A549 (cell line): ENCODE measurements at regions of chr16 and their contacts with region 1.

Region 1: DNA sequence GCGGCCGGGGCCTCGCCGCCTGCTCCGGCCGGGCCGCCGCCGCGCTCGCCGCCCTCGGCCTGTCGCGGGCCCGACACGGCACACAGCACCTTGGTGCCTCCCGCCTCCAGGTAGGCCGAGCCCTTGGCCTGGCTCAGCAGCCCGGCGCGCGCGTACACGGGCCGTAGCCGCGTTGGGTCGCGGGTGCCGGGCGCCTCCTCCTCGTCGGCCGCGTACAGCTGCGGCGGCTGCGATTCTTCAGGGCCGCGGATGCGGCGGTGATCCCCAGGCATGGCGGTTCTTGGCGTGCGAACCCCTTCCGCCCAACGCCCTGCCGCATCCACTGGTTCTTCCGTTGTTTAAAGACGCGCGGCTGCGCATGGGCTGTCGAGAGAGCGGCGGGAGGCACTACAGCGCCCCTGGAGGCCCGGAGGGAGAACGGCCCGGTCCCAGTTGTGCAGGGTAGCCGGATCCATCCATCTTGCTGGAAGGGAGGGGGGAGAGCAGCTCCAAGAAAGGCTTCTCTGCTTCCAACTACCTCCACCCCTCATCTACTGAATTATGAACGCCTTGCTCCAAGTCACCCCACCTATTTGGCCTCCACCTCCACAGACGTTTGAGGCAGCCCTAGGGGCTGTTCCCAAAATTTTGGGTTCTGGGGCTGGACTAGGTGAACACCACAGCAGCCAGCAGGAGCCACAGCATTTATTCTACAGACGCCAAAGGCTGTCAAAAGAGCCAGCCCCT is at the start of gene EXOSC6:
- DNase-seq: peak; percentile 94 to 97
- ATAC-seq: peak; percentile 79 to 95
- H3K4me3 ChIP-seq: peak within 1 kb of the TSS; percentile 69
- H3K27ac ChIP-seq: peak within 1 kb of the TSS; percentile 94 to 98
- H3K4me1 ChIP-seq: peaks cover 11% of the 10 kb centered on the region
- CTCF ChIP-seq: peak; percentile 72
- EP300 ChIP-seq: peak in 1 of 2 experiments; percentile 13; a peak in 1 of 5 replicates
- POLR2A ChIP-seq: peak; percentile 84
- RAD21 ChIP-seq: no peak
- polyA plus RNA-seq, gene EXOSC6: 12.9 and 15.0 TPM in 2 replicates

Region 2: DNA sequence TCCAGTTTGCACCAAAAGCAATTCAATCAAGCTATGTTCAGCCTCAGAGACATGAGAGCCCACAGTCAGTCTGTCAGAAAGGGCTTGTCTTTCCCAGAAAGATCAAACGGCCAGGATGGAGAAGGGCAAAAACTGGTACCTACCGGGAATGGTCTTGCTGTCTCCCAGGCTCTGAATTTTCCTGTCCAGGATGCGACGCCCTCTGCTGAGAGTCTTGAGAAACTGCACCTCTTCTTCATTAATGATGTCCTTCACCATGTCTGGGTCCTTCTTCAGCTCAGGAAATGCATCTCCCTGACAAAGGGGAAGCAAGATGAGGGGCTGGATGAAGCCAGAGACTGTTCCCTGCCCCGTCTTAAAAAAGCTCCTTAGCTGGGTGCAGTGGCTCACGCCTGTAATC is 15.7 kb after region 1 on chr16:
- CTCF ChIA-PET with region 1: interaction called, 53 read pairs
- POLR2A ChIA-PET with region 1: interaction called, 3 read pairs
- DNase-seq: peak; percentile 66 to 67
- ATAC-seq: peak; percentile 85 to 88; a peak in 5 of 6 replicates
- H3K4me3 ChIP-seq: no peak overlapping the region
- H3K27ac ChIP-seq: no peak overlapping the region
- H3K4me1 ChIP-seq: no peaks in the 10 kb centered on the region
- CTCF ChIP-seq: peak; percentile 40; the same call in 2 of the 3 replicates
- EP300 ChIP-seq: no peak
- POLR2A ChIP-seq: no peak
- RAD21 ChIP-seq: peak in 1 of 2 experiments; percentile 37; a peak in 2 of 5 replicates

Region 3: GRCh38 chr16:70276392-70276791 is 24.6 kb after region 1 on chr16:
- CTCF ChIA-PET with region 1: interaction called, 34 read pairs
- POLR2A ChIA-PET with region 1: interaction called, 7 read pairs
- DNase-seq: no peak
- ATAC-seq: no peak
- H3K4me3 ChIP-seq: no peak overlapping the region
- H3K27ac ChIP-seq: no peak overlapping the region
- H3K4me1 ChIP-seq: no peaks in the 10 kb centered on the region
- CTCF ChIP-seq: no peak
- EP300 ChIP-seq: no peak
- POLR2A ChIP-seq: no peak
- RAD21 ChIP-seq: no peak

Region 4: GRCh38 chr16:70289229-70290098 is 37.7 kb after region 1 on chr16 and contains the start of gene AARS1:
- CTCF ChIA-PET with region 1: interaction called, 10 read pairs
- POLR2A ChIA-PET with region 1: interaction called, 7 read pairs
- DNase-seq: peak; percentile 99 to 100
- ATAC-seq: peak; percentile 99 to 100
- H3K4me3 ChIP-seq: peak within 1 kb of the TSS; percentile 100
- H3K27ac ChIP-seq: peak within 1 kb of the TSS; percentile 95 to 100
- H3K4me1 ChIP-seq: peaks cover 28% of the 10 kb centered on the region
- CTCF ChIP-seq: no peak
- EP300 ChIP-seq: no peak; a peak in 1 of 5 replicates
- POLR2A ChIP-seq: peak; percentile 90
- RAD21 ChIP-seq: no peak
- polyA plus RNA-seq, gene AARS1: 325 and 344 TPM in 2 replicates